Right cardiac atrium (tissue), 5 donors: ENCODE measurements at regions of chr12 and their contacts with region 1.

Region 1: GRCh38 chr12:2485681-2486080 is 309.1 kb upstream of the FKBP4 start:
- DNase-seq: no peak
- ATAC-seq: no peak
- H3K4me3 ChIP-seq: no peak overlapping the region
- H3K27ac ChIP-seq: no peak overlapping the region
- H3K4me1 ChIP-seq: peaks cover 7% of the 10 kb centered on the region
- H3K27me3 ChIP-seq: no peaks in the 10 kb centered on the region

Region 2: DNA sequence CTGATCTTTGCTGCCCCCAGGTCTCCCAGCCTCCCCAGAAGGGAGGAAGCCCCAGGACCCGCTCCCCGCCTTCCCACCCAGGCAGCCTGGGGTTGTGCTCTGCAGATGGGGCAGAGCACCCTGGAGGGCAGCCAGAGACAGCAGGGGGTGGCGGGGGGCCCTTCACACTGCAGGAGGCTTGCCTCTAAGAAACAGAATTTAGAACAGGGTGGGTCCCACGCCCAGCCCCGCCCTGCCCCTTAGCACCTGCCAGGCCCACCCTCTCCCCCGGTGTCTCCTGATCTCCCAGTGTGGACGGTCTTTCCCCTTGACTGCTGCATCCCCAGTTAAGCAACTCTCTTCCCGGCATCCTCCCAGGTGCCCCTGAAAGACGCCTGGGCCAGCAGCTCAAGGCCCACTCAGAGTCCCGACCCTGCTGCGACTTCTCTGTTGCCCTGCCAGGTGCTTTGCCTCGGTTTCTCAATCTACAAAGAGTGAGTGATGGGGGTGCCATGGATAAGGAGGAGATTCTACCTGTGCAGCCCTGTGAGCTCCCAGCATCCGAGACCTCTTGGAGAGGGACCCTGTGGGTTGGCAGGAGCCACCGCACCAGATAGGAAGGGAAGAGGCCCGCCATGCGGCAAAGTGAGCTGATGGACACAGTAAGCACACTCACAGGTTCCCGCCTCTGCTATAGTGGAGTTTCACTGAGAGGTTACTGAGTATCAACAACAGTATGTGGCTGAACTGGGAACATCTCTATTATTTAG is 18.1 kb before region 1 on chr12:
- intact Hi-C with region 1: loop called in 1 of 4 experiments (anchors 2 kb)
- DNase-seq: no peak
- ATAC-seq: peak in 1 of 2 donors; percentile 14
- H3K4me3 ChIP-seq: no peak overlapping the region
- H3K27ac ChIP-seq: no peak overlapping the region
- H3K4me1 ChIP-seq: no peaks in the 10 kb centered on the region
- H3K27me3 ChIP-seq: no peaks in the 10 kb centered on the region